A673 (cell line): ENCODE measurements at regions of chr10 and their contacts with region 1.

Region 1: DNA sequence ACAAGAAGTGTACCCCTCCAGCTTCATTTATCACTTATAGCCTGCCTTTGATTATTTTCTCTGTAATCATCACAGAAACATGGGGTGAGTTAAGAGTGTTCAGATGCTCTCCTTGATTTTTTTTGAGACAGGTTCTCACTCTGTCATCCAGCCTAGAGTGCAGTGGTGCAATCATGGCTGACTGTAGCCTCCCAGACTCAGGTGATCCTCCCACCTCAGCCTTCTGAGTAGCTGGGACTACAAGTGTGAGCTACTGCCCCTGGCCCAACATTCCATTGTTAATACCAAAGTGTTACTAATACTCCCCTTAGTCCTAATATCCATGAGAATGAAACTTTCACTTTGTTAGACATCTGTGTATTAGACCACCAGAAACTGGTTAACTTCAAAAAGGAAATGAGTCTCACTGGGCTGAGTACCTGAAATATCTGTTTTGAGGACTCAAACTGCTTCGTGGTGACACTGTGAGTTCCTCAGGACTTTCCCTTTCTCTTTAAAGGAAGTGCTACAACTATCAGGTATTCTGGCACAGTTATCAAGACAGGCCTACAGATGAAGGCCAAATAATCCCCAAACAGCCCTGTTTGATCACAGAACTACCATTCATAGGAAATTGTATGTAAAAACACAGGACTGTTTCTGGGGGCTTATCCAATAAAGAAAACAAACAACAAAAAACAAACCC is 20.5 kb upstream of the CFAP70 start:
- DNase-seq: no peak
- H3K4me3 ChIP-seq: no peak overlapping the region
- H3K27ac ChIP-seq: no peak overlapping the region
- H3K4me1 ChIP-seq: no peaks in the 10 kb centered on the region
- H3K27me3 ChIP-seq: no peaks in the 10 kb centered on the region
- CTCF ChIP-seq: no peak

Region 2: DNA sequence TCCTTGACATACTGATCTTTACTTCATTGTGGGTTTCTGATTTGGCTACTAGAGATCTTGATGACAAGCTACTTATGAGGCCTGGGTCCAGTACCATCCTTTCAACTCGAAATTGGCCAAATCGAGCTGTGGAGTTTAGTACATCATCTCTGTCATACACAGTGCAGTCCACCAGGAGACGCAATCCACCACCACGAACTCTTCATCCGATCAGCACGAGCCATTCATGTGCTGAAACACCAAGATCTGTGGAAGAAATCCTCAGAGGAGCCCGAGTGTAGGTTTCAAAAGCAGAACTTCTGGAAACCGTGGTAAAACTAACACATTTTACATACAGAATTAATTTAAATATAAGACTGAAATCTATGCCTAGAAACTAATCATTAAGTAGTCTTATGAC is 146.3 kb before region 1 on chr10:
- CTCF ChIA-PET with region 1: no interaction called
- POLR2A ChIA-PET with region 1: interaction called, 10 read pairs
- intact Hi-C with region 1: no loop called
- DNase-seq: no peak
- H3K4me3 ChIP-seq: no peak overlapping the region
- H3K27ac ChIP-seq: no peak overlapping the region
- H3K4me1 ChIP-seq: no peaks in the 10 kb centered on the region
- H3K27me3 ChIP-seq: no peaks in the 10 kb centered on the region
- CTCF ChIP-seq: peak; percentile 36